ENCODE measurements at regions of chr5 and their contacts with region 1.

Region 1: GRCh38 chr5:146426853-146427618 is 20.1 kb upstream of the TCERG1 start:
- DNase-seq: no peak
- ATAC-seq: peak; percentile 46 to 90 (median 87)
- H3K4me3 ChIP-seq: no peak overlapping the region
- H3K27ac ChIP-seq: no peak overlapping the region
- H3K4me1 ChIP-seq: no peaks in the 10 kb centered on the region
- H3K27me3 ChIP-seq: no peaks in the 10 kb centered on the region
- CTCF ChIP-seq: peak; percentile 10 to 64 (median 44)

Region 2: DNA sequence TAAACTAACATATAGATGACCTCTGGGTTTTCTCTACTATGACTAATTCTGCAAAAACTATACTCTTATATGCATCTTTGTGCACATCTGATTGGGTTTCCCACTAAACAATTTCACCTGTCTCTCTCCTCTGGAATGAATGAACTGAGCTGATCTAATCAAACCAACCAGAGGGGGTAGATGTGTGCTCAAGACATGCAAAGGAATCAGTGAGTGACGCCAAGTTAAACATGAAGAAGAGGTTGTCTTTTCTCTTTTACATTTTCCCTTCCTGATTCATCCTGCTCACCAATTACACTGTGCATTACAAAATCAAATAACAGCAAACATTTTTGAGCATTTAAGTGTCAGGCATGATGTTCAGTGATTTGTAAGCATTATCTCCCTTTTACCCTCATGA is 524.6 kb before region 1 on chr5:
- intact Hi-C with region 1: no loop called
- DNase-seq: no peak
- ATAC-seq: no peak
- H3K4me3 ChIP-seq: no peak overlapping the region
- H3K27ac ChIP-seq: no peak overlapping the region
- H3K4me1 ChIP-seq: no peaks in the 10 kb centered on the region
- H3K27me3 ChIP-seq: no peaks in the 10 kb centered on the region
- CTCF ChIP-seq: no peak

Region 3: GRCh38 chr5:146291421-146292074 is 135.5 kb before region 1 on chr5:
- intact Hi-C with region 1: loop called in 2 of 3 experiments (anchors 10 kb)
- DNase-seq: no peak
- ATAC-seq: peak in 3 of 4 donors; percentile 64 to 83 (median 78)
- H3K4me3 ChIP-seq: no peak overlapping the region
- H3K27ac ChIP-seq: no peak overlapping the region
- H3K4me1 ChIP-seq: no peaks in the 10 kb centered on the region
- H3K27me3 ChIP-seq: no peaks in the 10 kb centered on the region
- CTCF ChIP-seq: peak in 3 of 4 donors; percentile 36 to 40 (median 38)

Measured in pancreas (tissue), 10 donors.